Activated CD4-positive, alpha-beta T cell treated with anti-CD3 and anti-CD28 coated beads for 36 hours (primary cell): ENCODE measurements at regions of chr17 and their contacts with region 1.

Region 1: DNA sequence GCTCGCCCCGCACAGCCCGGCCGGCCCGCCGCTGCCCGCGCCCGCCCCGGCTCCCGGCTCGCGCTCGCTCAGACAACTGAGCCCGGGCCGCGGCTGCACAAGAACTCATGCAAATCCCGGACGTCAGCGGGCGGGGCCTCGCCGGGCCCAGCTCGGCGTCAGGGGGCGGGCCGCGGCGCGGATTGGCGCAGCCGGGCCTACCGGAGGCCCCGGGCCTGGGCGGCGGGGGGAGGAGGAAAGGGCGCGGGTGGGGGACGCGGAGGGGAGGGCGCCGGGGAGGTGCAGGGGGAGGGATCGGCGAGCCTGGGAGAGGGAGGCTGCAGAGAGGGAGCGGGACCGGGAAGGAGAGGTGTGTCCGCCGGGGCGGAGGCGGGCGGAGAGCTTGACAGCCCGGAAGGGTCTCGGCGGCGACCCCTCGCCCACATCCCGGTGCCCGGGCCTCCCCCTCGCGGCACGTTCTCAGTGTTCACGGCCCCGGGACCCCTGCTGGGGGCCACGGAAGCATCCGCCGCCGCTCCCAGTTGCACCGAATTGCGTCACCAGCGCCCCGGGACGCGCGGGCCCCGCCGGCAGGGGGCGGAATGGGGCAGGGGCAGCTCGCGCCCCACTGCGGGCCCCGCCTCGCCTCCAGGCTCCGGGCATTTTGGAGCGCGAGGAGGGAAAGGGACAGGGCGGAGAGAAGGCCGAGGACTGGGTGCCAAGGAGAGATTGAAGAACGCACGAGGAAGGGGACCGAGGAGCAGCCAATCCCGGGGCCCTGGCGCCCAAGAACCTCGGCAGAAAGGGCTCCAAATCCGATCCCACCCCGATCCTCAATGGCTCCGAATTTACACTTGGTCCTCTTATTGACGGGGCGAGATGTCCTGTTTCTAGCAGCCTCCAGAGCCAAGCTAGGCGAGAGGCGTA is at the start of gene CBX4:
- DNase-seq: peak; percentile 96
- ATAC-seq: peak; percentile 80
- H3K4me3 Mint-ChIP-seq: peak within 1 kb of the TSS; percentile 92
- H3K27ac Mint-ChIP-seq: peak within 1 kb of the TSS; percentile 82
- H3K4me1 Mint-ChIP-seq: peaks cover 49% of the 10 kb centered on the region
- H3K27me3 Mint-ChIP-seq: peaks cover 29% of the 10 kb centered on the region
- total RNA-seq, gene CBX4: 14.9 to 18.5 TPM

Region 2: GRCh38 chr17:79684132-79684985 is 155.3 kb before region 1 on chr17:
- CTCF ChIA-PET with region 1: no interaction called
- POLR2A ChIA-PET with region 1: no interaction called
- intact Hi-C with region 1: no loop called
- DNase-seq: no peak
- ATAC-seq: no peak
- H3K4me3 Mint-ChIP-seq: no peak overlapping the region
- H3K27ac Mint-ChIP-seq: no peak overlapping the region
- H3K4me1 Mint-ChIP-seq: no peaks in the 10 kb centered on the region
- H3K27me3 Mint-ChIP-seq: peaks cover 10% of the 10 kb centered on the region

Region 3: DNA sequence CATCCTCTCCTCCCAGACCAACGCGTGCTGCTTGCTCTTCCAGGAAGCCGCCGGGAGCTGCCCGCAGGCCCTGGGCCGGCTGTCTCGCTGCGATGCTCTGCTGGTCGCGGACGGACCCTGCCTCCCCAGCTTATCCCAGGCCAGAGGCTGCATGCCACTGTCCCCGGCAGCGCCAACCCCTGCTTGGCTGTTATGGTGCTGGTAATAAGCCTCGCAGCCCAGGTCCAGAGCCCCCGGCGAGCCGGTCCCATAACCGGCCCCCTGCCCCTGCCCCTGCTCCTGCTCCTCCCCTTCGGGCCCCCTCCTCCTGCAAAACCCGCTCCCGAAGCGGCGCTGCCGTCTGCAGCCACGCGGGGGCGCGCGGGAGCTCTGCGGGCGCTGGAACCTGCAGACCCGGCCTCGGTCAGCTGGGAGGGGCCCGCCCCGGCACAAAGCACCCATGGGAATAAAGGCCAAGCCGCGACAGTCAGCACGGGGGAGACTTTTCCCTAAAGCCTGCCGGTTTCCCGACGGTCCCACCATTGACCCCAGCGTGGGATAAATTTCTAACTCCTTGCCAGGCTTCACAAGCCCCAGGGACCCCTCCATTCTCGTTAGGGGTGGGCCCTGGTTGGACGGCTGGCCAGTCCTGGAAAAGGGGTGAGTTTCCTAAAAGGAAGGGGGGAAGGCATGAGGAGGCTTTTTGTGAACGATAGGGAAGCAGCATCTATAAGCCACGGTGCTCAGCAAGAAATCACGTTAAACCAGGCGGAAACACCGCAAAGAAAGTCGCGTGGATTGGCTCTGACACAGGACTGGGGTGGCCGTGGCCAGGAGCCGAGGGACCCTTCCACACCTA is 97.6 kb before region 1 on chr17:
- CTCF ChIA-PET with region 1: interaction called, 4 read pairs
- POLR2A ChIA-PET with region 1: interaction called, 3 read pairs
- intact Hi-C with region 1: loop called (anchors 1 to 10 kb)
- DNase-seq: peak; percentile 84
- ATAC-seq: peak; percentile 63
- H3K4me3 Mint-ChIP-seq: no peak overlapping the region
- H3K27ac Mint-ChIP-seq: no peak overlapping the region
- H3K4me1 Mint-ChIP-seq: peaks cover 13% of the 10 kb centered on the region
- H3K27me3 Mint-ChIP-seq: peaks cover 31% of the 10 kb centered on the region

Region 4: GRCh38 chr17:79777894-79778503 is 61.6 kb before region 1 on chr17 and contains the start of gene CBX2:
- CTCF ChIA-PET with region 1: no interaction called
- POLR2A ChIA-PET with region 1: interaction called, 3 read pairs
- intact Hi-C with region 1: loop called in 1 of 2 experiments (anchors 1 kb)
- DNase-seq: peak; percentile 90
- ATAC-seq: peak; percentile 84
- H3K4me3 Mint-ChIP-seq: peak within 1 kb of the TSS; percentile 77
- H3K27ac Mint-ChIP-seq: peak within 1 kb of the TSS; percentile 76
- H3K4me1 Mint-ChIP-seq: peaks cover 17% of the 10 kb centered on the region
- H3K27me3 Mint-ChIP-seq: peaks cover 64% of the 10 kb centered on the region
- total RNA-seq, gene CBX2: 4.2 to 4.3 TPM

Region 5: DNA sequence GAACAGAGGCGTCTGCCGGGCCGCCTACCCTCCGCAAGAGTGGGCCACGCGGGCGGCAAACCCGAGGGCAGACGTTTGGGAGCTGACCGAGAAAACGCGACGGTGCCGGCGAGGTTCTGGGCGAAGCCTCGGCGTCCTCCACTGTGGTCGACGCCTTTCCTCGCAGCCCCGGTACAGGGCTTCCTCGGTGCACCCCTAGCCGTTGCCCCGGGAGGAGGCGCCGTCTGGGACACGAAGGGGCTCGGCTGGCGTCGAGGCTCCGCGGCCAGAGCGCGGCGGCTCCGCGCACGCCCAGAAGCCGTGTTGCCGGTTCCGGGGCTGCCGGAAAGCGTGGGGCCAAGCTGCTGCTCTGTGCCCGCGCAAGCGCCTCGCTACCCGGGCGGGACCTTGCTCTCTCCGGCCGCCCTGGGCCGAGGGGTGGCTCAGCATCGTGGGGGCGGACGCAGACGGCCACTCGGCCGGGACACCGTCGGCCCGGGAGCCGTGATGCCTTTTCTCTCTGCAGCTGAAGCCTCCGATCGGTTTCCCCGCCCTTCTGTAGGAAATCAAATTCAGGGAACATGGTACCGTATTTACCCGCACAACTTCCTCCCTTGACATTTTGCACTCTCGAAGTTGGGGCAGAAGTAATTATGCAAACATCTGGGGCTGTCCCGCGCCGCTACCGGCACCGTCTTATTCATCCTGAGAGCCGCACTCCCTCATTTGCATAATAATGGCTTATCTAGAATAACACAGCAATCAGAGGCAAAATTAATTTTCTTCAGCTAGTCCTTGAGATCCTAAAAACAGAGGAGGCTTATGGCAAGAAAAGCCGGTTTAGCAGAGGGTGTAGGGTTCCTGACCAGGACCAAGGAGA is 35.4 kb before region 1 on chr17:
- CTCF ChIA-PET with region 1: interaction called, 6 read pairs
- POLR2A ChIA-PET with region 1: interaction called, 6 read pairs
- intact Hi-C with region 1: loop called in 1 of 2 experiments (anchors 2 kb)
- DNase-seq: peak; percentile 91
- ATAC-seq: peak; percentile 82
- H3K4me3 Mint-ChIP-seq: peak overlapping the region; percentile 66
- H3K27ac Mint-ChIP-seq: peak overlapping the region; percentile 63
- H3K4me1 Mint-ChIP-seq: peaks cover 43% of the 10 kb centered on the region
- H3K27me3 Mint-ChIP-seq: peaks cover 72% of the 10 kb centered on the region

Region 6: GRCh38 chr17:80035943-80036714 is 196.5 kb after region 1 on chr17 and contains the start of gene CCDC40:
- CTCF ChIA-PET with region 1: no interaction called
- POLR2A ChIA-PET with region 1: no interaction called
- intact Hi-C with region 1: loop called in 1 of 2 experiments (anchors 1 kb)
- DNase-seq: peak; percentile 82
- ATAC-seq: peak; percentile 72
- H3K4me3 Mint-ChIP-seq: peak within 1 kb of the TSS; percentile 82
- H3K27ac Mint-ChIP-seq: no peak within 1 kb of the TSS
- H3K4me1 Mint-ChIP-seq: peaks cover 7% of the 10 kb centered on the region
- H3K27me3 Mint-ChIP-seq: peaks cover 12% of the 10 kb centered on the region
- total RNA-seq, gene CCDC40: 0.56 to 0.57 TPM